GM12878 (cell line): ENCODE measurements at regions of chr4 and their contacts with region 1.

Region 1: GRCh38 chr4:18057821-18058533 is 36.4 kb upstream of the LCORL start:
- DNase-seq: no peak
- ATAC-seq: peak; percentile 85
- H3K4me3 ChIP-seq: peak overlapping the region; percentile 46; the same call in 1 of the 2 replicates
- H3K27ac ChIP-seq: peak overlapping the region; percentile 21
- H3K4me1 ChIP-seq: peaks cover 7% of the 10 kb centered on the region; the same call in 1 of the 2 replicates
- H3K27me3 ChIP-seq: no peaks in the 10 kb centered on the region
- CTCF ChIP-seq: no peak
- EP300 ChIP-seq: no peak
- POLR2A ChIP-seq: no peak
- RAD21 ChIP-seq: no peak

Region 2: DNA sequence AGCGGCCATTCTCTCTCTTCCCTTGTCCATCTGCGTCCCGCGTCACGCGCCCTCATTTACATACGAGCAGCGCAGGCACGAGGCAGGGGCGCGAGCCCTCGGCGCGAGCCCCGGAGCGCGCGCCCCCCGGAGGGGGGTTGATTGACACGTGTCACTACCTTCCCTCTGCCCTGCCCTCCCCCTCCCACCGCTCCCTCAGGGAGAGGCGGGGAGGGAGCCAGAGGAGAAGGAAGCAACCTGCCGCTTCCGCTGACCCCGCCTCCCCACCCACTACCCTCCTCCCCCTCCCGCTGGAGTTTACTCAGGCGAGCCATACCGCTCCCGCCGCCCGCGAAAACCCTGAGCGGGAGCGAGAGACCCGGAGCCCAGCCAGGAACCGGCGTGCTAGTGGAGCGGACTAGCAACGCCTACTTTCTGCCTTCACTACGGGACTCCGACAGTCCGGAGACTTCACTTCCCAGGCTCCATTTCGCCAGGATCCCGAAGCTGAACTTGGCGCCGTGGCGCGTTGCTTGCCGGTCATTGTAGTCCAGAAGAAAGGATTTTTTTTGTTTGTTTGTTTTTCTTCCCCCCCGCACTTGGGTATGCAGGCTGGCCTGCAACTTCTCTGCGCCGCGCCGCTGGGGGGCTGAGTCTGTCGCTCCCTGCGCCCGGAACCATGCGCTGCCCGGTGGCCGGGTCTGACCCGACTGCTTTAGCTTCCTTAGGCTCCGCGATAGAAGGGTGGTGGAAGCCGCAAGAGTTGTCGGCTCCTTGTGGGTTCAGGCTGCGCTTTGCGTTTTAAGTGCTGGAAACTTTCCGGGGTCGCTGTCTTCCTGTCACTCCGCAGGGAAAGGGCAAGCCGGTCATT is 36.0 kb before region 1 on chr4 and contains the start of gene LCORL:
- CTCF ChIA-PET with region 1: interaction called, 4 read pairs
- POLR2A ChIA-PET with region 1: interaction called, 7 read pairs
- RAD21 ChIA-PET with region 1: interaction called, 3 read pairs
- SMC1A ChIA-PET with region 1: interaction called, 11 read pairs
- in situ Hi-C with region 1: no loop called
- intact Hi-C with region 1: loop called (anchors 1 kb)
- DNase-seq: peak; percentile 90
- ATAC-seq: peak; percentile 87
- H3K4me3 ChIP-seq: peak within 1 kb of the TSS; percentile 90
- H3K27ac ChIP-seq: peak within 1 kb of the TSS; percentile 84
- H3K4me1 ChIP-seq: no peaks in the 10 kb centered on the region; the same call in 1 of the 2 replicates
- H3K27me3 ChIP-seq: no peaks in the 10 kb centered on the region
- CTCF ChIP-seq: peak; percentile 29 to 45 (median 35); a peak in 4 of 6 replicates
- EP300 ChIP-seq: no peak
- POLR2A ChIP-seq: peak; percentile 77
- RAD21 ChIP-seq: peak; percentile 43; the same call in 1 of the 2 replicates
- polyA plus RNA-seq, gene LCORL: 2.2 to 3.3 TPM

Region 3: DNA sequence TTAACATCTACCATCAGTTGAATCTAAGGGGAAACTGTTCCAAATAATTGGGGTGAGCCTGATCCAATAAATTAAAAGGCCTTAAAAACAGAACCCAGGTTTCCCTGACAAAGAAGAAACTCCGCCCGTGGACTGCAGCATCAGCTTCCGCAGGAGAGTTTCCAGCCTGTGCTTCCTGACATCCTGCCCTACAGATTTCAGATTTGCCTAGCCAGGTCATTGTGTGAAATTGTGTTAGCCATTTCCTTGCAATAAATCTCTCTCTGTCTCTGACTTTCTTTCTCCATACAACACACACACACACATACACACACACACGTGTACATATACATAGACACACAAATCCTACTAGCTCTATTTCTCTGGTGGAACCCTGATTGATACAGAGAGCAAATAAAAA is 11.8 kb after region 1 on chr4:
- CTCF ChIA-PET with region 1: no interaction called
- POLR2A ChIA-PET with region 1: no interaction called
- RAD21 ChIA-PET with region 1: no interaction called
- SMC1A ChIA-PET with region 1: interaction called, 11 read pairs
- in situ Hi-C with region 1: no loop called
- intact Hi-C with region 1: no loop called
- DNase-seq: no peak
- ATAC-seq: no peak
- H3K4me3 ChIP-seq: no peak overlapping the region
- H3K27ac ChIP-seq: no peak overlapping the region
- H3K4me1 ChIP-seq: no peaks in the 10 kb centered on the region
- H3K27me3 ChIP-seq: no peaks in the 10 kb centered on the region
- CTCF ChIP-seq: no peak
- EP300 ChIP-seq: no peak
- POLR2A ChIP-seq: no peak
- RAD21 ChIP-seq: no peak

Region 4: DNA sequence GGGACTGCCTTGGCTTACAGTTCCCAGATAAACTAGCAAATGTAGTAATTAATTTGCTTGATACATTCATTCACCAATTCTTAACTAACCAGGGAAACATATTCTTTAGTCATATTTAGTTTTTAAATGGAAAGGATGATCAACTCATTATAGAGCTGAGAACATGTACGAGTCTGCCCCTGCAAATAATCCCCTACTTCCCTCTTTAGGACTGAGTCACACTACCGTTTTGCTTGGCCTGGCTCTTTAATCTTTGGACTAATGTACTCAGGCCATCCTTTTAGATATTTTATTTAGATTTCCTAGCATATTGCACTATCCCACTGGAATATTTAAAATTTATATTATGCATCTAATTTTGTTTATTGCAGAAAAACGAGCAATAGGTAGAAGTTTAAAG is 69.1 kb after region 1 on chr4:
- CTCF ChIA-PET with region 1: no interaction called
- POLR2A ChIA-PET with region 1: no interaction called
- RAD21 ChIA-PET with region 1: no interaction called
- SMC1A ChIA-PET with region 1: no interaction called
- in situ Hi-C with region 1: no loop called
- intact Hi-C with region 1: no loop called
- DNase-seq: no peak
- ATAC-seq: no peak
- H3K4me3 ChIP-seq: no peak overlapping the region
- H3K27ac ChIP-seq: no peak overlapping the region
- H3K4me1 ChIP-seq: no peaks in the 10 kb centered on the region
- H3K27me3 ChIP-seq: no peaks in the 10 kb centered on the region
- CTCF ChIP-seq: no peak
- EP300 ChIP-seq: no peak
- POLR2A ChIP-seq: no peak
- RAD21 ChIP-seq: no peak